ENCODE measurements at regions of chr1 and their contacts with region 1.

Region 1: GRCh38 chr1:247078261-247079140 is at the start of gene ZNF670:
- DNase-seq: peak; percentile 95 to 97 (median 96)
- ATAC-seq: peak; percentile 100
- H3K4me3 ChIP-seq: peak within 1 kb of the TSS; percentile 74 to 98 (median 88)
- H3K27ac ChIP-seq: peak within 1 kb of the TSS; percentile 47 to 84 (median 72)
- H3K4me1 ChIP-seq: peaks cover 0 to 21% (median 11%) of the 10 kb centered on the region in 12 donors
- H3K27me3 ChIP-seq: no peaks in the 10 kb centered on the region
- CTCF ChIP-seq: peak in 2 of 12 donors; percentile 3 to 16
- POLR2A ChIP-seq: peak in 1 of 2 donors; percentile 70
- total RNA-seq, gene ZNF670: 0.60 to 3.6 (median 1.0) TPM

Region 2: DNA sequence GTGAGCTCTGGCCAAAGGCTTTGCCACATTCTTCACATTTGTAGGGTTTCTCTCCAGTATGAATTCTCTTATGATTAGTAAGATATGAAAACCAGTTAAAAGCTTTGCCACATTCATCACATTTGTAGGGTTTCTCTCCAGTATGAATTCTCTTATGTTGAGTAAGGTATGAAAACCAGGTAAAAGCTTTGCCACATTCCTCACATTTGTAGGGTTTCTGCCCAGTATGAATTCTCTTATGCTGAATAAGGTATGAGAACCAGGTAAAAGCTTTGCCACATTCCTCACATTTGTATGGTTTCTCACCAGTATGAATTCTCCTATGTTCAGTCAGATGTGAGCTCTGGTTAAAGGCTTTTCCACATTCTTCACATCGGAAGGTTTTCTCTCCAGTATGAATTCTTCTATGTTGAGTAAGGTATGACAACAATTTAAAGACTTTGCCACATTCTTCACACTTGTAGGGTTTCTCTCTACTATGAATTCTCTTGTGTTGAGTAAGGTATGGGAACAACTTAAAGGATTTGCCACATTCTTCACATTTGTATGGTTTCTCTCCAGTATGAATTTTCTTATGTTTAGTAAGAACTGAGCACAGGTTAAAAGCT is 91.3 kb before region 1 on chr1:
- intact Hi-C with region 1: no loop called
- DNase-seq: no peak
- ATAC-seq: no peak
- H3K4me3 ChIP-seq: no peak overlapping the region
- H3K27ac ChIP-seq: no peak overlapping the region
- H3K4me1 ChIP-seq: no peaks in the 10 kb centered on the region
- H3K27me3 ChIP-seq: no peaks in the 10 kb centered on the region
- CTCF ChIP-seq: no peak
- POLR2A ChIP-seq: no peak

Region 3: GRCh38 chr1:247103859-247104591 is 25.5 kb after region 1 on chr1 and contains the start of gene ZNF669:
- intact Hi-C with region 1: loop called in 2 of 10 experiments (anchors 2 kb)
- DNase-seq: peak; percentile 96 to 98 (median 98)
- ATAC-seq: peak; percentile 100
- H3K4me3 ChIP-seq: peak within 1 kb of the TSS; percentile 63 to 97 (median 86)
- H3K27ac ChIP-seq: peak within 1 kb of the TSS; percentile 48 to 90 (median 79)
- H3K4me1 ChIP-seq: peaks cover 0 to 18% (median 14%) of the 10 kb centered on the region in 12 donors
- H3K27me3 ChIP-seq: no peaks in the 10 kb centered on the region
- CTCF ChIP-seq: no peak
- POLR2A ChIP-seq: peak in 1 of 2 donors; percentile 77
- total RNA-seq, gene ZNF669: 1.5 to 5.4 (median 3.2) TPM

Measured in heart left ventricle (tissue), 16 donors.